ENCODE measurements at regions of chr15 and their contacts with region 1.

Region 1: GRCh38 chr15:61155741-61156700 is 73.1 kb downstream of the RORA start:
- DNase-seq: peak; percentile 25 to 62
- ATAC-seq: peak; percentile 68 to 80 (median 78)
- H3K4me3 ChIP-seq: peak overlapping the region in 1 of 10 donors; percentile 7
- H3K27ac ChIP-seq: peak overlapping the region in 9 of 10 donors; percentile 27 to 61 (median 48)
- H3K4me1 ChIP-seq: peaks cover 0 to 29% (median 10%) of the 10 kb centered on the region in 9 donors
- H3K27me3 ChIP-seq: no peaks in the 10 kb centered on the region
- CTCF ChIP-seq: no peak

Region 2: GRCh38 chr15:60751985-60752952 is 403.8 kb before region 1 on chr15:
- intact Hi-C with region 1: loop called in 1 of 10 experiments (anchors 10 kb)
- DNase-seq: peak; percentile 20 to 49
- ATAC-seq: peak; percentile 80 to 96 (median 93)
- H3K4me3 ChIP-seq: peak overlapping the region in 8 of 10 donors; percentile 16 to 37 (median 30)
- H3K27ac ChIP-seq: peak overlapping the region; percentile 7 to 82 (median 48)
- H3K4me1 ChIP-seq: peaks cover 0 to 23% (median 10%) of the 10 kb centered on the region in 9 donors
- H3K27me3 ChIP-seq: no peaks in the 10 kb centered on the region
- CTCF ChIP-seq: no peak

Region 3: GRCh38 chr15:60883691-60884640 is 272.1 kb before region 1 on chr15:
- intact Hi-C with region 1: no loop called
- DNase-seq: no peak
- ATAC-seq: peak in 3 of 8 donors; percentile 16 to 57 (median 54)
- H3K4me3 ChIP-seq: no peak overlapping the region
- H3K27ac ChIP-seq: no peak overlapping the region
- H3K4me1 ChIP-seq: peaks cover 0 to 11% (median 0%) of the 10 kb centered on the region in 9 donors
- H3K27me3 ChIP-seq: no peaks in the 10 kb centered on the region
- CTCF ChIP-seq: no peak

Region 4: DNA sequence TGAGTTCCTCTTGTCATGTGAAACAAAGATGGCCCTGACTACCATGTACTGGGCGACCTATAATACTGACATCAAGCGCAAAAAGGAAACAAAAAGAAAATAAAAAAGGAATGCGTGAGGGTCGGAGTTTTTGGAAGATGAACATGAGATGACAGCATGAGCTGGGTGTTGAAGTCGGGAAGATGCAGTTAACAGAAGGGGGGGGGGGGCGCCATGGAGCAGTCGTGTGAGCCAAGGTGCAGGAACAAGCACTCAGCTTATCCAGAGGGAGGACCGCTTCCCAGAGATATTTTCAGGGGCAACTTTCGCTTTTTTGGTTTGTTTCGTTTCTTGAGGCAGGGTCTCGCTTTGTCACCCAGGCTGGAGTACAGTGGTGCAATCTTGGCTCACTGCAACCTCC is 37.1 kb before region 1 on chr15:
- intact Hi-C with region 1: no loop called
- DNase-seq: no peak
- ATAC-seq: peak in 1 of 8 donors; percentile 34
- H3K4me3 ChIP-seq: no peak overlapping the region
- H3K27ac ChIP-seq: no peak overlapping the region
- H3K4me1 ChIP-seq: peaks cover 0 to 4% (median 0%) of the 10 kb centered on the region in 9 donors
- H3K27me3 ChIP-seq: no peaks in the 10 kb centered on the region
- CTCF ChIP-seq: peak in 4 of 9 donors; percentile 10 to 25 (median 15)

Region 5: DNA sequence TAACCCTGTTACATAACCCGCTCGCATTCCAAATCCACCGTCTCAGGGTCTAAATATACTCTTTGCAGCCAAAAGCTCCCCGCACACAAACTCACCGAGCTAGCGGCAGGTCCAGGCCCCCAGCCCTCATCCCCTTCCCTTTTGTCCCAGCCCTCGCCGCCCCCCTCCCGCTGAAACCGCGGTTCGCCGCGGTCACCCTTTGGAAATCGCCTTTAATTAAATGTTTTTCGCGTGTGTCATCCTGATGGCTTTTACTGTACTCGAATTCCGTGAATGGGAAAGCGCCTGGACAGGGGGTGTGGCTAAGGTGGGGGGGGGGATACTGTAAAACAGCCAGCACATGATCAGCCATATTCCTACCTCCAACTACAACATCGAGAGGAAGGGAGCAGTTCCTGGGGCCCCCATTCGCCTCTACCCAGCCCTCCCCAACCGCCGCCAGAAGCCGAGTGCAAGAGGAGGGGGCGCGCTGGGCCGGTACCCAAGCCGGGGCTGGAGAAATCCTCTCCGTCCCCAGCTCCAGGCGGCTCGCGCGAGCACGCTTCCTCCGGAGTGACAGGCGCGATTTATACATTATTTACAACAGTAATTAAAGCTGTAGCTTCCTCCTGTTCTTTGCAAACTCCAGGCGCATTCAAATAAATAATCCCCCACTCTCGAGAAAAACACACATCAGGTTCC is 71.4 kb after region 1 on chr15:
- intact Hi-C with region 1: no loop called
- DNase-seq: peak; percentile 10 to 15
- ATAC-seq: peak; percentile 6 to 74 (median 52)
- H3K4me3 ChIP-seq: peak overlapping the region; percentile 50 to 81 (median 67)
- H3K27ac ChIP-seq: peak overlapping the region in 6 of 10 donors; percentile 3 to 44 (median 39)
- H3K4me1 ChIP-seq: peaks cover 0 to 29% (median 16%) of the 10 kb centered on the region in 9 donors
- H3K27me3 ChIP-seq: peaks cover 0 to 65% (median 0%) of the 10 kb centered on the region in 7 donors
- CTCF ChIP-seq: no peak